Left lung (tissue), 14 donors: ENCODE measurements at regions of chr17 and their contacts with region 1.

Region 1: GRCh38 chr17:27601069-27601975 is 29.7 kb upstream of the LGALS9 start:
- DNase-seq: peak in 3 of 4 donors; percentile 69 to 88 (median 77)
- ATAC-seq: peak; percentile 80
- H3K4me3 ChIP-seq: no peak overlapping the region
- H3K27ac ChIP-seq: no peak overlapping the region
- H3K4me1 ChIP-seq: peaks cover 0 to 10% of the 10 kb centered on the region in 2 donors
- H3K27me3 ChIP-seq: no peaks in the 10 kb centered on the region
- CTCF ChIP-seq: peak; percentile 83 to 90

Region 2: GRCh38 chr17:27236717-27237315 is 364.5 kb before region 1 on chr17:
- intact Hi-C with region 1: loop called in 1 of 2 experiments (anchors 5 kb)
- DNase-seq: peak in 2 of 4 donors; percentile 70 to 84
- ATAC-seq: peak; percentile 88
- H3K4me3 ChIP-seq: no peak overlapping the region
- H3K27ac ChIP-seq: no peak overlapping the region
- H3K4me1 ChIP-seq: peaks cover 4 to 68% of the 10 kb centered on the region in 2 donors
- H3K27me3 ChIP-seq: no peaks in the 10 kb centered on the region
- CTCF ChIP-seq: peak; percentile 94 to 97

Region 3: GRCh38 chr17:27353461-27354050 is 247.8 kb before region 1 on chr17:
- intact Hi-C with region 1: loop called in 1 of 2 experiments (anchors 5 kb)
- DNase-seq: peak; percentile 83 to 99 (median 94)
- ATAC-seq: peak; percentile 97
- H3K4me3 ChIP-seq: peak overlapping the region; percentile 63 to 66
- H3K27ac ChIP-seq: peak overlapping the region; percentile 87 to 89
- H3K4me1 ChIP-seq: peaks cover 12 to 36% of the 10 kb centered on the region in 2 donors
- H3K27me3 ChIP-seq: no peaks in the 10 kb centered on the region
- CTCF ChIP-seq: peak; percentile 95 to 100

Region 4: DNA sequence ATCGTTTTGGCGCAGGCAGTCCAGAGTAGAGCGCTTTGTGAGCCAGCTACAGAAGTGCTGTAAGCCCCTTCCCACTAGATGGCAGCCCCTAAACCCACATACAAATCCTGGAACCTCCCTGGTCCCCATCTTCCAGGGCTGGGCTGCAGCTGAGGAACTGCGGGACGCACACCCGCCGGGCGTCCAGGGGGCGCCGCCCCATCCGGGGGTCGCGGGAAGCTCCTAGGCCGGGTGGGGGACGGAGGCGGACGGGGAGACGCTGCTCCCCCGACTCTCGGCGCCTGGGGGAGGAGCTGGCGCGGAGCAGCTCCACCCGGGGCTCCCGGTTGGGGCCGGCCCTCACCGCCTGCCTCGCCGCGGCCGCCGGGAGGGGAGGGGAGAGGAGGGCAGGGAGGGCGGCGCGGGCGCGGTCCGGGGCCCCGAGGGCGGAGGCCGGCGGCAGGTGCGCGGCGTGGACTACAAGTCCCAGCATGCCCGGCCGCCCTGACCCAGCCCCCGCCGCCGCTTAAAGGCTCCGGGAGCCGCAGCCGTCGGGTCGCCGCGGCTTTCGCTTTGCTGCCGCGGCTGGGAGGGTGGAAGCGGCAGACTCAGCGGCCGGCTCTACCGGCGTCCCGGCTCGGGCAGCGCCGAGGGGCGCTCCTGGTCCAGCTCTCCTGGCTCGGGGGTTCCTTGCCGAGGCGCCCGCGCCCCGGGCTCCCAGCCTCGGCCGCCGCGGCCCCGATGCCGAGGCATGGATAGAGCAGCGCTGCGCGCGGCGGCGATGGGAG is 145.2 kb before region 1 on chr17 and contains the start of gene KSR1:
- intact Hi-C with region 1: loop called in 1 of 2 experiments (anchors 10 kb)
- DNase-seq: peak; percentile 82 to 97 (median 89)
- ATAC-seq: peak; percentile 97
- H3K4me3 ChIP-seq: peak within 1 kb of the TSS; percentile 74 to 87
- H3K27ac ChIP-seq: peak within 1 kb of the TSS; percentile 65 to 77
- H3K4me1 ChIP-seq: peaks cover 14 to 40% of the 10 kb centered on the region in 2 donors
- H3K27me3 ChIP-seq: no peaks in the 10 kb centered on the region
- CTCF ChIP-seq: no peak
- polyA plus RNA-seq, gene KSR1: 55.2 to 70.0 (median 64.7) TPM

Region 5: GRCh38 chr17:27526604-27527230 is 74.6 kb before region 1 on chr17:
- intact Hi-C with region 1: no loop called
- DNase-seq: peak in 3 of 4 donors; percentile 66 to 84 (median 81)
- ATAC-seq: peak; percentile 61
- H3K4me3 ChIP-seq: peak overlapping the region in 1 of 2 donors; percentile 1
- H3K27ac ChIP-seq: peak overlapping the region in 1 of 2 donors; percentile 53
- H3K4me1 ChIP-seq: peaks cover 31 to 62% of the 10 kb centered on the region in 2 donors
- H3K27me3 ChIP-seq: no peaks in the 10 kb centered on the region
- CTCF ChIP-seq: no peak